Activated naive CD4-positive, alpha-beta T cell treated with anti-CD3 and anti-CD28 coated beads for 36 hours (primary cell): ENCODE measurements at regions of chr6 and their contacts with region 1.

Region 1: GRCh38 chr6:13454286-13455221 is 32.8 kb downstream of the GFOD1 start:
- DNase-seq: peak; percentile 86
- H3K4me3 Mint-ChIP-seq: peak overlapping the region; percentile 46
- H3K27ac Mint-ChIP-seq: peak overlapping the region; percentile 93
- H3K4me1 Mint-ChIP-seq: peaks cover 45% of the 10 kb centered on the region
- H3K27me3 Mint-ChIP-seq: no peaks in the 10 kb centered on the region

Region 2: DNA sequence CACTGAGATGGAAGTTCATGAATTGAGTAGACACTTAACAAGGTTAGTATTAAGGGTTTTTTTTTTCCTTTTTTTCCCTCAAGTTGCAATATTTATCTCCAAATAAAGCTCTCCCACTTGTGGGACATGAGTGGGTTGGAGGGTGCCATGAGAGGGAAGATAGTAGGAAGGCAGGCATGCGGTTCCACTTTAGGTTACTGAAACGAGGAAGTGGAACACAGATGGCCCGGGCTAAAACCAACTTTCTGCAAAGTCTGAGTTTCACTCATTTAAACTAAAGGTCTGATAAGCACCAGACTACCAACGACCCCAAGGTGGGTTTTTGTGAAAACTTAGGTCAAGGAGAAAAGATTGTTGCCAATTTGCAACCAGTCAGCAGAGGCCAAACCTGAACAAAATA is 168.4 kb before region 1 on chr6:
- CTCF ChIA-PET with region 1: no interaction called
- intact Hi-C with region 1: no loop called
- DNase-seq: no peak
- H3K4me3 Mint-ChIP-seq: no peak overlapping the region
- H3K27ac Mint-ChIP-seq: no peak overlapping the region
- H3K4me1 Mint-ChIP-seq: no peaks in the 10 kb centered on the region
- H3K27me3 Mint-ChIP-seq: no peaks in the 10 kb centered on the region

Region 3: DNA sequence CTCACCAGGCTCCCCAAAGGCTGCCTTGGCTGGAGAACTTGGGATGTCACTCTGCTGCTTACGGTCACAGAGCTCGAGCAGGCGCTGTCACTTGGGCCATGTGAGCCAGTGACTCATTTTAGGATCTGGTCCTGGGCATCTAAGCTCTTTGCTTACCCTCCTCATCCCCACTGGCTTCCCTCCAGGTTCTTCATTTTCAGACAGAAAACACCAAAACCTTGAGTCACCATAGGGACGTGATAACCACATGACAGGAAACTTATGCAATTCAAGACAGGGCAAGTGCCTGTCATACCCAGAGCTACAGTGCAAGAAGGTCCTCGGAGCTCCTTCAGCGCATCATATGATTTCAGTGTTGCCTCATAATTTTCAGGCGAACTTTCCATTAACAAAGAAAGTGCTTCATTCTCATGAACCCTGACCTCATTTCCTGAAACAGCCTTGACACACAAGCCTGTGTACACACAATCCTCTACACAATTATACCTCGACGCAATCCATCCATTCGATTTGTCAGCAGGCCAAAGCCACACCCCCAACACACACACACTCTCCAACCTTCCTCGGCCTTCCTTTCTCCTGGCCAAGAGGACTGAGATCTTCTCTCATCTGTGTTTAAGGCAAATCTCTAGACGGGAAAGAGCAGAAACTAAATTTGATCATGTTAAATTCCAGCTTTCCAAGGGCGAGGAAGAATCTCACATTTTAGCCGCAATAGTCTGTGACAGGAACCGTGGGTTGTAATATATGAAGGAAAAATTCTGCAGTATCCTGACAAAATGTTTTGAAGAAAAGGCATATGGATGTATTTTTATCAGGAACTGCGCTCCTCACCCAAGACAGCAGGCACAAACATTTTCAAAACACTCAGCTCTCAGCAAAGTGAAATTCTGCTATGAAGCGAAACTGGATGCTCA is 151.5 kb before region 1 on chr6:
- CTCF ChIA-PET with region 1: no interaction called
- intact Hi-C with region 1: loop called (anchors 1 kb)
- DNase-seq: peak; percentile 79
- H3K4me3 Mint-ChIP-seq: peak overlapping the region; percentile 10
- H3K27ac Mint-ChIP-seq: peak overlapping the region; percentile 86
- H3K4me1 Mint-ChIP-seq: peaks cover 38% of the 10 kb centered on the region
- H3K27me3 Mint-ChIP-seq: no peaks in the 10 kb centered on the region

Region 4: GRCh38 chr6:13375360-13375878 is 79.1 kb before region 1 on chr6:
- CTCF ChIA-PET with region 1: no interaction called
- intact Hi-C with region 1: loop called (anchors 1 kb)
- DNase-seq: peak; percentile 78
- H3K4me3 Mint-ChIP-seq: no peak overlapping the region
- H3K27ac Mint-ChIP-seq: peak overlapping the region; percentile 21
- H3K4me1 Mint-ChIP-seq: peaks cover 23% of the 10 kb centered on the region
- H3K27me3 Mint-ChIP-seq: no peaks in the 10 kb centered on the region

Region 5: DNA sequence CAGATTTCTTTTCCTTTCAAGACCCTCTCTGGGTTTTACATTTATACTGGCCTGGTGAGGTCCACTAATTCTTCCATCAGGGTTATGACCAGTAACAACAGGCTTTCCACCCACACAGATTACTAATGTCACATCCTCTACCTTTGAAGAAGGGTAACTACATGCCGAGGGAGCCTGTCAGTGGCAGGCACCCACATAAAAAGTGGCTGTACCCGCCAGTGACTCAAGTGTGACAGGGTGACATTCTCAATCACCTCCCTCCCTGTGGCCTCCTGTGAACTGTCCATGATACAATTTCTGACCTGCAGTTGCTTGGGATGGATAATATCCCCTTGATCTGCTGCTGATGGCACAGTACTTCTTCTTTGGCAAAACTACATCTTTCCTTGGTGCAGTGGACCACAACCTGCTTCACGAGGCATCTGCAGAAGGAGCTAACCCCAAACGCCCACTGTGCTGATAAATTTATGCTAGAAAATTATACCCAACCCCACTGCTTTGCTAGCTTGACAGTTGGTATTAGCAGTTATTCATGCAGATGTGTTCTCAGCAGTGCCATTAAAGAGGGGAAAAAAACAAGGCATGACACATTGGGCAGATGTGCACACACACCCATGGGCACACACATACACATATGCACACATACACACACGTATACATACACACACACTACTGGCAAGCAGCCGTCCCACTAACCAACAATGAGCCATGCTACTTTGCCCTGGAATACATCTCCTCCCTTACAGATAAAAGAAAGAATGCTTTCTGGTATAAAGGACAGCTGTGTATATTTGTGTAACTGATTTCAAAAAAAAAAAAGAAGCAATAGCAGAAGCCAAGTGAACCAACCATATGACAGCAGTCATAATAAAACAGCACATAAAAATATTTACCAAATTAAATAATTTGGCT is 12.0 kb after region 1 on chr6:
- CTCF ChIA-PET with region 1: interaction called, 3 read pairs
- intact Hi-C with region 1: loop called (anchors 1 kb)
- DNase-seq: peak; percentile 73
- H3K4me3 Mint-ChIP-seq: no peak overlapping the region
- H3K27ac Mint-ChIP-seq: no peak overlapping the region
- H3K4me1 Mint-ChIP-seq: peaks cover 45% of the 10 kb centered on the region
- H3K27me3 Mint-ChIP-seq: no peaks in the 10 kb centered on the region

Region 6: GRCh38 chr6:13487122-13488014 is 32.8 kb after region 1 on chr6 and contains the start of gene GFOD1:
- CTCF ChIA-PET with region 1: interaction called, 3 read pairs
- intact Hi-C with region 1: loop called (anchors 1 kb)
- DNase-seq: peak; percentile 80
- H3K4me3 Mint-ChIP-seq: peak within 1 kb of the TSS; percentile 92
- H3K27ac Mint-ChIP-seq: peak within 1 kb of the TSS; percentile 47
- H3K4me1 Mint-ChIP-seq: peaks cover 24% of the 10 kb centered on the region
- H3K27me3 Mint-ChIP-seq: peaks cover 2% of the 10 kb centered on the region
- total RNA-seq, gene GFOD1: 3.7 to 4.2 TPM

Region 7: GRCh38 chr6:13538084-13538483 is 83.5 kb after region 1 on chr6:
- CTCF ChIA-PET with region 1: no interaction called
- intact Hi-C with region 1: loop called (anchors 2 kb)
- DNase-seq: no peak
- H3K4me3 Mint-ChIP-seq: no peak overlapping the region
- H3K27ac Mint-ChIP-seq: no peak overlapping the region
- H3K4me1 Mint-ChIP-seq: no peaks in the 10 kb centered on the region
- H3K27me3 Mint-ChIP-seq: no peaks in the 10 kb centered on the region

Region 8: DNA sequence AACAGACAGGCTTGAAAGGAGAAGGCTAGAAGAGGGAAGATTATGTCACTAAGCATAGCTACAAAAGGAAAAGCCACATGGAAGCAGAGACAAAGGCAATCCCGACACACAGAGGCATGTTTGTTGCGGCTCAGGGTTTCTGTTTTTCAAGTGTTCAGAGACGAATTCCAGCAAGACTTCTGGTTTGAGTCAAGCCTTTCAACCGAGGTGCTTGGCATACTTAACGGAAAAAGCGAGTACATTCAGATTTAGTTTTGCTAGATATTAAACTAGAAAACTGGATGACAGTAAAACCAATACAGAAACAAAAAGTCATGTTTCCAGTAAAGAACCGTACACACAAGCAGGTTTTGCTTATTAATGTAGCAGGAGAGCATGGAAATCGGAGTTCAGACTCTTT is 332.6 kb after region 1 on chr6:
- CTCF ChIA-PET with region 1: no interaction called
- intact Hi-C with region 1: loop called (anchors 1 kb)
- DNase-seq: peak; percentile 75
- H3K4me3 Mint-ChIP-seq: peak overlapping the region; percentile 14
- H3K27ac Mint-ChIP-seq: peak overlapping the region; percentile 79
- H3K4me1 Mint-ChIP-seq: peaks cover 34% of the 10 kb centered on the region
- H3K27me3 Mint-ChIP-seq: no peaks in the 10 kb centered on the region